ENCODE measurements at regions of chr19 and their contacts with region 1.

Region 1: DNA sequence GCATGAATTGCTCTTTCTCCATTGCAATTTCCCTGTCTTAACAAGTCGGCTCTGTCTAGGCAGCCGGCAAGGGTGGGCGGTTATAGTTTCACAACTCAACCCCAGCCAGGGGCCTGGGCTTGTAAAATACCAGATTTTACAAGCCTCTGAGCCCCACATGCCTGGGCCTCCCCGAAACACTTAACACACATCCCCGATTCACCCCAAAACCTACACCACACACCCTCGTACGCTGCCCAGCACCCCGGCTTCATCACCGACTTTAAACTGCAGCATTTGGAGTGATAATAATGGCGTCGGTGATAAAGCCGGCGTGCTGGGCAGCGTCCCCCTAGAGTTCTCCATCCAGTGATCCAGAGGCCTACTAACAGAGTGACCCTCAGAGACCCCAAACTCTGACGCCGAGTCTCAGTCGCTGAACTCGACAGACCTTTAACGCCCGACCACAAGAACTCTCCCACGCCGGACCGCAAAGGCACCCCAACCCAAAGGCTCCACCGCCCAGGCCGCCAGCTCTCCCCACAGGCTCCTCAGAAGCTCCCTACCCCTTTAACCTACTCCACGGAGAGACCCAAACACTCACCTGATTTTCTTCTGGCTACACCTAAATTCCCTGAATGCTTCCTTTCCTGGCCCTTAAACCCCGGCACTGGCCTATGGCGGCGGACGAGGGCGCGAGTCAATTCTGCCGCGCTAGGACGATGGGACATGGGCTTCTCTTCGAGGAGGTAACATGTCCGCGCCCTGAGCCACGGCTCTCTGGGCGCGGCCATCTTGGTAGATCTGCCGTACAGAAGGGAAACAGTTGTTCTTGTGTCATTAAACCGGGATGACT is at the start of gene ZNF649:
- DNase-seq: peak; percentile 68 to 88
- H3K4me3 ChIP-seq: peak within 1 kb of the TSS; percentile 93 to 100 (median 96)
- H3K27ac ChIP-seq: peak within 1 kb of the TSS; percentile 93
- H3K4me1 ChIP-seq: peaks cover 4 to 17% (median 8%) of the 10 kb centered on the region in 4 experiments
- H3K27me3 ChIP-seq: no peaks in the 10 kb centered on the region
- CTCF ChIP-seq: no peak
- EP300 ChIP-seq: 0 out of 3 replicates have a peak, but pooled peaks of 1 of the 2 experiments have one; percentile 34
- POLR2A ChIP-seq: peak; percentile 41 to 85
- RAD21 ChIP-seq: peak in 1 of 2 experiments; percentile 19; a peak in 2 of 4 replicates
- total RNA-seq, gene ZNF649: 44.0 and 51.7 TPM in 2 replicates

Region 2: GRCh38 chr19:51807111-51807701 is 97.3 kb before region 1 on chr19:
- CTCF ChIA-PET with region 1: no interaction called
- POLR2A ChIA-PET with region 1: no interaction called
- DNase-seq: peak; percentile 42 to 46
- H3K4me3 ChIP-seq: no peak overlapping the region
- H3K27ac ChIP-seq: no peak overlapping the region; the same call in 1 of the 2 replicates
- H3K4me1 ChIP-seq: peaks cover 0 to 5% (median 1%) of the 10 kb centered on the region in 4 experiments; a peak in 3 of 7 replicates
- H3K27me3 ChIP-seq: no peaks in the 10 kb centered on the region
- CTCF ChIP-seq: no peak
- EP300 ChIP-seq: no peak
- POLR2A ChIP-seq: no peak
- RAD21 ChIP-seq: peak in 1 of 2 experiments; percentile 13; a peak in 1 of 4 replicates

Region 3: DNA sequence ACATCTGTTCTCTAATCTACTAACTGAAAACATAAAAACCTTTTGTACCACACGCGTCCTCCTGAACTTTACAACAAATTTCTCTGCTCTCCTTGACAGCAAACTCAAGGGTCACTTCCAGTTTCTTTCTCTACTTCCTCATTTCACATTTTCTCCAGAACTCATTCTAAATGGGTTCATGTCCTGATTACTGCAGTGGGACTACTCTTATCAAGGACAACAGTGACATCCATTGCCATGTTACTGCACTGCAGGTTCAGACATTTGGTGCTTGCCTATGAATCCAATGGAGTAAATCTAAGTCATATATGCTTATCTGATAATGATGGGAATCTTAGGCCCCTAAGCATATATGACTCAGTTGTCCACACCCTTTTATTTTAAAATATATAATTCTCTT is 74.3 kb before region 1 on chr19:
- CTCF ChIA-PET with region 1: no interaction called
- POLR2A ChIA-PET with region 1: no interaction called
- DNase-seq: no peak
- H3K4me3 ChIP-seq: no peak overlapping the region
- H3K27ac ChIP-seq: no peak overlapping the region
- H3K4me1 ChIP-seq: no peaks in the 10 kb centered on the region
- H3K27me3 ChIP-seq: no peaks in the 10 kb centered on the region
- CTCF ChIP-seq: no peak
- EP300 ChIP-seq: no peak
- POLR2A ChIP-seq: no peak
- RAD21 ChIP-seq: no peak; a peak in 1 of 4 replicates

Region 4: GRCh38 chr19:51887522-51888498 is 16.7 kb before region 1 on chr19 and contains the start of gene ZNF577:
- CTCF ChIA-PET with region 1: interaction called, 5 read pairs
- POLR2A ChIA-PET with region 1: interaction called, 26 read pairs
- DNase-seq: peak; percentile 82 to 89
- H3K4me3 ChIP-seq: peak within 1 kb of the TSS; percentile 82 to 87 (median 84)
- H3K27ac ChIP-seq: peak within 1 kb of the TSS; percentile 82
- H3K4me1 ChIP-seq: peaks cover 0 to 3% (median 0%) of the 10 kb centered on the region in 4 experiments; a peak in 1 of 7 replicates
- H3K27me3 ChIP-seq: no peaks in the 10 kb centered on the region
- CTCF ChIP-seq: no peak
- EP300 ChIP-seq: peak in 1 of 2 experiments; percentile 55; a peak in 1 of 3 replicates
- POLR2A ChIP-seq: peak; percentile 81 to 87
- RAD21 ChIP-seq: no peak
- total RNA-seq, gene ZNF577: 14.9 and 19.3 TPM in 2 replicates

Region 5: DNA sequence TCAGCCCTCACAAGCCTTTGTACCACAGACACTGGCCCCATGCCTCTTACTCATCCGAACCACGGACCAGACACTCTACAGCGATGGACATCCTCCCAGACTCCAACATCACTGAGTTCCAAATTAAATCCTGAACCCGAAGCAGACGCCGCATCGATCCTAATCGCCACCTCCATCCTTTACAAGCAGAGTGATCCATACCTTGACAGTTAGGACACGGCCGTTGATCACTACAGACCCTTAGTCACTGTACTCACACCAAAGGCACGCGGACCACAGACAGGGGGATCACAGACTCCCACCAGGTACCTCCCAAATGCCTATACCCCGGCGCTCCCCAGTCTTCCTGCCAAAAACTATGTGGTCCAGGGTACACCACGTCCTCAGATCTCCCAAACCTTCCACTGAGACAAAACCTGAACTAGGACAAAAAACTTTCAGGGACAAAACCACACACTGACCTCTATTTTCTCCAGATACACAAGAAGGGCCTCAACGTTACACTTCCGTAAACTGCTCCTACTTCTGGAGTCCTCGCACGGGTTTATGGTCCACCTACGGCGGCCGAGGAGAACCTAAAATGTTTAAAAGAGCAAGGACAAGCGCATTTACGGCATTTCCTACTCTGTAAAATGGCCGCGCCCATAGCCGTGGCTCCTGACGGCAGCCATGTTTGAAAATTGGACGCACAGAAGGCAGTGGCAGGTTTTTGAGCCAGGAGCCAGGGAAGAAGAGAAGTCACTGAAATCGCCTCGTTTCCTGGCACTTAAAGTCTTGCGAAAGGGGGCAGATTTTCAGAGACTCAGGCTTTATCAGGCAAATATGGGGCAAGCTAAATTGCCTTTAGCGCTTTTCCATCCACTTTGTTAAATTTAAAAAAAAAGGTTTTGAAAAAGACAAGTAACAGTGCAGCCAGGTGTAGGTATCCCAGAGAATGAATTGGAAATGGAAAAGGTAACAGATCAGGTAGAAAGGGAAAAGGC is 82.1 kb after region 1 on chr19 and contains the start of gene ZNF350:
- CTCF ChIA-PET with region 1: no interaction called
- POLR2A ChIA-PET with region 1: no interaction called
- DNase-seq: peak; percentile 81 to 83
- H3K4me3 ChIP-seq: peak within 1 kb of the TSS; percentile 90 to 99 (median 98)
- H3K27ac ChIP-seq: peak within 1 kb of the TSS; percentile 3; the same call in 1 of the 2 replicates
- H3K4me1 ChIP-seq: peaks cover 0 to 3% (median 0%) of the 10 kb centered on the region in 4 experiments; a peak in 1 of 7 replicates
- H3K27me3 ChIP-seq: no peaks in the 10 kb centered on the region
- CTCF ChIP-seq: no peak
- EP300 ChIP-seq: peak in 1 of 2 experiments; percentile 30; a peak in 1 of 3 replicates
- POLR2A ChIP-seq: peak in 1 of 2 experiments; percentile 67; a peak in 2 of 3 replicates
- RAD21 ChIP-seq: no peak
- total RNA-seq, gene ZNF350: 5.3 and 6.2 TPM in 2 replicates